Ascending aorta (tissue), 2 donors: ENCODE measurements at regions of chr3 and their contacts with region 1.

Region 1: DNA sequence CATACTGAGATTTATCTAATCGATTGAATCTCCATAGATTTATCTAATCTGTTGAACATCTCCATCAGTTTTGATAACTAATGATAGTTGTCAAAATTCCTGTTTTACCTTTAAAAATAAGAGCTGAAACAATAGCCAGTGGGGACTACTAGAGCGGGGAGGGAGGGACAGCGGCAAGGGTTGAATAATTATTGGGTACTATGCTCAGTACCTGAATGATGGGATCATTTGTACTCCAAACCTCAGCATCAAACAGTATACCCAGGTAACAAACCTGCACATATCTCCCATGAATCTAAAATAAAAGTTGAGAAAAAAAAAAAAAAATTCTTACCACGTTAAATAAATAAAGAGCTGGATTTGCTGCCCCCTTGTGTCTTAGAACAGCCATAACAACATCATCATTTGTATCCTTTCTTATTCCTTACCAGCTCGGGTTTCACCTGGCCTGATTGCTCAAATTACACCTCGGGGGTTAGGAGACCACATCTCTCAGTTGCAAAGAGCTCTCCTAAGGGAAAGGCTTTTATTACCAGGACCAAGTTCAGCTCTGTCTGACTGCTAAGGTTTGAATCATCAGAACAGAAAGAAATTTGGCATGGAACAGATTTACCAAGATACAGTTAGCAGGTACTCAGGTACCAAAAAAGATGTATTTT is 25.7 kb upstream of the RPL39L start:
- DNase-seq: no peak
- H3K4me3 ChIP-seq: no peak overlapping the region
- H3K27ac ChIP-seq: no peak overlapping the region
- H3K4me1 ChIP-seq: peaks cover 2 to 5% of the 10 kb centered on the region in 2 donors
- H3K27me3 ChIP-seq: no peaks in the 10 kb centered on the region
- CTCF ChIP-seq: peak; percentile 58 to 70 (median 68)

Region 2: DNA sequence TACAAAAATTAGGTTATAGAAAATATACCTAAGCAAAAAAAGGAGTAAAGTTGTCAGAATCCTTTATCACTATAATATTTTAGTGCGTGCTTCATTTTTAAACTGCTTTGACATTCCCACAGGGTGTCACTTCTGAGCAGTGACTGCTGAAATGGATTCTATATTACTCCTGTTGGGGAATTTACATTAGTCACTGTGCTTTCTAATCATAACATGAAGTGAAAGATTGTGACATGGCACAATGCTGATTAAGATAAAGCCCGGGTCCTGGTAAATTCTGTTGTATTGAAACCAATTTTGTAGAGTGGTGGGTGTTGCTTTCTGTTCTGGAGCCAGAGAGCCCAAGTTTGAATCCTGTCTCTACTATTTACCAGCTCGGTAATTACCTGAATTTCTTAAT is 1874.7 kb before region 1 on chr3:
- intact Hi-C with region 1: no loop called
- DNase-seq: no peak
- H3K4me3 ChIP-seq: no peak overlapping the region
- H3K27ac ChIP-seq: no peak overlapping the region
- H3K4me1 ChIP-seq: no peaks in the 10 kb centered on the region
- H3K27me3 ChIP-seq: no peaks in the 10 kb centered on the region
- CTCF ChIP-seq: no peak

Region 3: GRCh38 chr3:186849374-186849975 is 315.5 kb before region 1 on chr3:
- intact Hi-C with region 1: loop called (anchors 1 kb)
- DNase-seq: no peak
- H3K4me3 ChIP-seq: no peak overlapping the region
- H3K27ac ChIP-seq: no peak overlapping the region
- H3K4me1 ChIP-seq: no peaks in the 10 kb centered on the region
- H3K27me3 ChIP-seq: no peaks in the 10 kb centered on the region
- CTCF ChIP-seq: peak; percentile 34 to 59 (median 37)

Region 4: GRCh38 chr3:187114511-187114910 is 50.5 kb before region 1 on chr3:
- intact Hi-C with region 1: loop called (anchors 2 kb)
- DNase-seq: no peak
- H3K4me3 ChIP-seq: no peak overlapping the region
- H3K27ac ChIP-seq: no peak overlapping the region
- H3K4me1 ChIP-seq: no peaks in the 10 kb centered on the region
- H3K27me3 ChIP-seq: no peaks in the 10 kb centered on the region
- CTCF ChIP-seq: no peak

Region 5: GRCh38 chr3:187139126-187139894 is 25.7 kb before region 1 on chr3 and contains the start of gene RPL39L:
- intact Hi-C with region 1: loop called (anchors 2 kb)
- DNase-seq: peak; percentile 35 to 90
- H3K4me3 ChIP-seq: peak within 1 kb of the TSS; percentile 65 to 76
- H3K27ac ChIP-seq: peak within 1 kb of the TSS; percentile 80 to 84
- H3K4me1 ChIP-seq: no peaks in the 10 kb centered on the region
- H3K27me3 ChIP-seq: no peaks in the 10 kb centered on the region
- CTCF ChIP-seq: peak; percentile 88 to 94 (median 90)
- total RNA-seq, gene RPL39L: 3.1 TPM

Region 6: DNA sequence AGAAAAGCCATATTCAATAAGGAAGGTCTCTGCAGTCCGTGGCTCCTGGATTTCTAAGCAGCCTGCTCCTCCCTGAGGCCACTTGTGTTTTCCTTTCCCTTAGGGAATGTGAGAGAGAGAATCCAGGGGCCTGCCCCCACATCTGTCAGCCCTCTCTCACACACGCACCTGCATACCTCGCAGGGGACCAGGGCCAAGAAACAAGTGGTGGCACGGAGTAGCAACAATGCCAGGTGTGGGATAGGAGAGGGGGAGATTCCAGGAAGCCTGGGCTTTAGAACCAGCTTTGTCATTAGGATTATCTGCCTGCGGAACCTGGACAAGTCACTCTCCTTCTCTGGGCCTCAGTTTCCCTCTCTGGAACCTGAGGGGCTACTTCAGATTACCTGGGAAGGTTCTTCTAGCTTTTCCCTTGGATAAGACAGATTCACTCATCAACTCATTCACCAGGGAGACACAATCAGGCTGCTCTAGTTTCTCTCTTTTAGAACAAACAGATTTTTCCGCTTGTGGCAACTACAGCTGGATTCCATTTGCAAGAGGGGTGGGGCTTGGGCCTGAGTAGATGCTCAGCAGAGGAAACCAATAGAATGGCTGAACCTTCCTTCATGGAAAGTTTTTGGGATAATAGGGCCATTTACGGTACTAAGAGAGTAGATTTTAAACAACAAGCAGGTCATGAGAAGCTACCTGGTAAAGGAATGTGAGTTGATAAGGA is 560.8 kb after region 1 on chr3:
- intact Hi-C with region 1: no loop called
- DNase-seq: no peak
- H3K4me3 ChIP-seq: no peak overlapping the region
- H3K27ac ChIP-seq: no peak overlapping the region
- H3K4me1 ChIP-seq: no peaks in the 10 kb centered on the region
- H3K27me3 ChIP-seq: no peaks in the 10 kb centered on the region
- CTCF ChIP-seq: no peak